ENCODE measurements at regions of chr17 and their contacts with region 1.

Region 1: DNA sequence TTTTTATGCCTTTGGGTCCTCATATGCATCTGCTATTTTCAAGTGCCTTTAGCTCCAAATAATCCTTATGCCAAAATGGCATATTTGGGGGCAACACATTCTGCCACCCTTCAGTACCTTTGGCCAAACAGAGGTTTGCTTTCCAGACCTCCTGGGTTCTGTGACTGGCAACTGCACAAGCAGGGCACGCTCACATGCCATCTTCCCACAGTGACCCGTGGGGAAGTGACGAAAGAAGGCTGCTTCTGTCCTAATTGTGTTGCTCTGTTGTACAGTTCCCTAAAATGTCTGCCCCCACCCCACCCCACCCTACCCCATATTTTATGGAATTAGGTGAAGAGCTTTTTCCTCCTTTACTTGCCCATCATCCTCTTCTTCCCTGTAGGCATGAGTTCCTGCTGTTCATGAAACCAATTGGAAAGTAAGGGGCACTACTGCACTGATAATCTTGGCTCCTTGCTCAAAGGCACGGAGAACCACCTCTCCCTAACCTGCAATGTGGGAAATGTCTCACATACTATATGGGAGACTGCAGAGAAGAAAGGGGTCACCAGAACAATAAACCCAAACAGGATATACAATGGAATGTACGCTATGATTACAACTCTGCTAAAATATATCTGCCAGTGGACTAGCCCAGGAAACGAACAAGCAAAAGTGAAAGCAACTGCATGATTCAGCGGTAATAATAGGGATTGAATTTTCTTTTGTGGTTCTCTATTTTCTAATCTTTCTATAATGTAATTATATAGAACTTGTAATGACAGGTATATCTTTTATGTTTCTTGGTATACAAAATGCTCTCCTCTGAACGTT is 3.3 kb upstream of the SLFN12L start:
- DNase-seq: peak; percentile 34
- H3K4me3 Mint-ChIP-seq: peak overlapping the region; percentile 86
- H3K27ac Mint-ChIP-seq: peak overlapping the region; percentile 99
- H3K4me1 Mint-ChIP-seq: peaks cover 57% of the 10 kb centered on the region
- H3K27me3 Mint-ChIP-seq: no peaks in the 10 kb centered on the region

Region 2: DNA sequence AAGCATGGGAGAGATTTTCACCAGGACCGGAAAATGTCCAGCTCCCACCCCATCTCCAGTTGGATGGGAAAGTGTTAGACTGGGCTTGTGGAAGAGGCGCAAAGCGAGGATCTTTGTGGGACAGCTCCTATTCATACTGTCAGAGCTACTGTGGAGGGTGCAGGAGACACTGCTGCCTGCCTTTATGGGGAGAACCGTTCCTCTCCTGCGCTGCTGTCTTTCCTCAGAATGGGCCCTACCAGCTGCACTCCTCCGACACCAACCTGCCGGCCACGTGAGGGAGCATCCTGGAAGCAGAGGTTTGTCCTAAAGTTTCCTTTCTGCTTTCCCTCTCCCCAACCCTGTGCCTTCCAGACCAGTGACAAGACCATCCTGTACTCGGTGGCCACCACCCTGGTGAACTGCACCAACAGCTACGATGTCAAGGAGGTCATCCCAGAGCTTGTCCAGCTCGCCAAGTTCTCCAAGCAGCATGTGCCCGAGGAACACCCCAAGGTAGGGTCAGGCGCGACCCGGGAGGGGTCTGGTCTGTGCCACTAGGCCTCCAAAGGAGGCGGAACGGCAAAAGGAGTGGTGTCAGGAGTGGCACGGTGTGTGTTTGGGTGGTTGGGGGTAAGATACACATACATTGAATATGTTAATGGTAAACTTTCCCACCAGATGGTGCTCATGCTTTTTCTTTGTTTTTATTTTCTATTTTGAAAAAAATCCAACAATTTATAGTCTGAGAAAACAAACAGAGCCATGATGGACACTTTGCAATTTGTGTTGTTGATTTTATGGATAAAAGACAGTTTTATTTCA is 369.6 kb before region 1 on chr17:
- intact Hi-C with region 1: loop called (anchors 1 kb)
- DNase-seq: no peak
- H3K4me3 Mint-ChIP-seq: no peak overlapping the region
- H3K27ac Mint-ChIP-seq: no peak overlapping the region
- H3K4me1 Mint-ChIP-seq: peaks cover 28% of the 10 kb centered on the region
- H3K27me3 Mint-ChIP-seq: no peaks in the 10 kb centered on the region

Region 3: GRCh38 chr17:35312790-35313711 is 227.7 kb before region 1 on chr17:
- intact Hi-C with region 1: loop called (anchors 1 kb)
- DNase-seq: peak; percentile 83
- H3K4me3 Mint-ChIP-seq: peak overlapping the region; percentile 92
- H3K27ac Mint-ChIP-seq: peak overlapping the region; percentile 94
- H3K4me1 Mint-ChIP-seq: peaks cover 46% of the 10 kb centered on the region
- H3K27me3 Mint-ChIP-seq: no peaks in the 10 kb centered on the region

Region 4: DNA sequence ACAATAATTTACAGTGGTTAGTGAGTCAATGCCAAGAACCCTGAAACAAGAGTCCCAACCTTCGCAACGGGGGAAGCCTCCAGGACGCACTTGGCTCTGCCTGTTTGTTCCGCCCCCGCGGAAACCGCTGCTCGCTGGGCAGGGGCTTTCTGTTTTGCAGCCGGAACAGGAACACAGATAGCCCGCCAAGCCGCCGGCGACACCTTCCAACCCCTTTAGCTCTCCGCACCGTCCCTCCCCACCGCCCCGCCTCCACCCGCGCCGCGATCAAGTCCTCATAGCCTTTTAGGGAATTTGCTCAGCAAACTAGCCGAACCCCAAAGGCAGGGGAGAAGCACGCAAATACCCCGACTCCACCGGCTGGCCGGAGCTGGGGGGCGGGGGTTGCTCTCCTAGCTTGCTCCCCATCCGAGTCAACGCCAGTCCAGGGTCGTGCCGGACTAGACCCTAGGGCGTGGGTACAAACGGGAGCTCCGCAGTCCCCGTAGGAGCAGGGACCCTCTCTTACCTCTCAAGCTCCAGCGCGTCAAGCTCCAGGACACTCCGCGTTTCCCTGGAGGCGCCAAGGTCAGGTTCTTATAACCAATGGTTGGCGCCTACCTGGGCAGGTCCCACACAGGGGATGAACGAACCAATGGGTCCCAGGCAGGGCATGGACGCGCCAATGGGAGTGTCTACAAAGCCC is 92.4 kb before region 1 on chr17 and contains the start of gene SLFN13:
- intact Hi-C with region 1: loop called (anchors 2 kb)
- DNase-seq: peak; percentile 83
- H3K4me3 Mint-ChIP-seq: peak within 1 kb of the TSS; percentile 65
- H3K27ac Mint-ChIP-seq: peak within 1 kb of the TSS; percentile 79
- H3K4me1 Mint-ChIP-seq: peaks cover 16% of the 10 kb centered on the region
- H3K27me3 Mint-ChIP-seq: no peaks in the 10 kb centered on the region
- total RNA-seq, gene SLFN13: 41.9 and 42.6 TPM in 2 replicates

Region 5: DNA sequence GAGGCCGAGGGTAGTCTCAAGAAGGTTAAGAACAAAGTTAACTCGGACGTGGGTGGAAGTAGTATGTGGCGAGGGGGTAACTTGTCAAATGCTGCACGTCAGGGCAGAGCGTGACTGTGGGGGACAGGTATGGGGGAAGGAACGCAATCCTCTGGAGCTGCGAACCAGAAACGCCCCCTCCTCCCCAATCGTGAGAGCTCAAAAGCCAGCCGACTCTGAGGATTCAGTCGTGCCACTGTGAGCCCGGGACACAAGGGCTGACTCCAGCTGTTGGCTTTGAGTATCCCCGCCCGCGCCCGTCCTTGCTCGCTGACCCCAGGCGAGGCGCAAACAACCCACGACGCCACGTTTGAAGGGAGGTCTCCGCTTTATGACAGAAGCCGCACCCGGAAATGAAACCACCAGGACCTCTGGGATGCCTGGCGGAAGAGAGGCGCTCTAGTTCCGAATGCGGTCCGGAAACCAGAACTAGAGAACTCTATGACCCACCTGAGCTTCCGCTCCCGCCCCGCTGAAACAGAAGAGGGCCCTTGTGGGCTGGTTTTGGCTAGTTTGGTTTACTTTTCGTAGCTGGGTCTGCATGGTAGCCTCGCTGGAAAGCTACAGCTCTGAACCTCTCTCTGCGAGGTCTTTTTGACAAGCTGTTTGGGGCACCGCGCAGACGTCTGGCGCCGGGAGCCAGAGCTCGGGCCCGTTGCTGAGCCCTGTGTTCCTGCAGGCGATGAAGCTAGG is 37.6 kb after region 1 on chr17 and contains the start of gene PEX12:
- intact Hi-C with region 1: loop called (anchors 2 kb)
- DNase-seq: peak; percentile 83
- H3K4me3 Mint-ChIP-seq: peak within 1 kb of the TSS; percentile 89
- H3K27ac Mint-ChIP-seq: peak within 1 kb of the TSS; percentile 91
- H3K4me1 Mint-ChIP-seq: peaks cover 25% of the 10 kb centered on the region
- H3K27me3 Mint-ChIP-seq: peaks cover 2% of the 10 kb centered on the region
- total RNA-seq, gene PEX12: 4.5 and 4.8 TPM in 2 replicates

Measured in activated T-helper 2 cell treated with anti-CD3 and anti-CD28 coated beads, Interferon-gamma antibody, Interleukin-2, Interleukin-4, amounts not matched to agents 10 μg/mL and 5 μg/mL and 100 μg/mL, durations not matched to agents 14 hours and 24 hours and 36 hours (primary cell).